ENCODE measurements at regions of chrX and their contacts with region 1.

Region 1: GRCh38 chrX:3806630-3807029 is 93.2 kb upstream of the PRKX start:
- DNase-seq: no peak

Region 2: DNA sequence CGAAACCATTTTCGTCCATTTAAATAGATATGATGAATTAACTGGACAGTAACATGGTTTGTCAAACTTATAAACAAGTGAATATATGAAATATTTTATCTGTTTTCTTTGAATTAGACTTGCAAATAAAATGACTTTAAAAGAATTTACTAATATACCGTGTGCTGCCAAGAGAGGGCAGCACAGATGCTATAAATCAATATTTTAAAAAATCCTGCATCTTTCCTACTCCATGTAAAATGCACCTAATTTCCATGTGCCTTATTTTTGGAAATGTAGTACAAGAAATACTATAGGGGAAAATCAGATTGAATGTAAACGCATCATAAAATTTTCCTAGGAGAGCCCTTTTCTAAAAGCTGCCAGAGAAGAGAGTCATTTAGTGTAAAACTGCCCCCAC is 155.4 kb before region 1 on chrX:
- intact Hi-C with region 1: loop called (anchors 10 kb)
- DNase-seq: no peak

Measured in cardiac septum (tissue), 1 donor.